ENCODE measurements at regions of chr4 and their contacts with region 1.

Region 1: DNA sequence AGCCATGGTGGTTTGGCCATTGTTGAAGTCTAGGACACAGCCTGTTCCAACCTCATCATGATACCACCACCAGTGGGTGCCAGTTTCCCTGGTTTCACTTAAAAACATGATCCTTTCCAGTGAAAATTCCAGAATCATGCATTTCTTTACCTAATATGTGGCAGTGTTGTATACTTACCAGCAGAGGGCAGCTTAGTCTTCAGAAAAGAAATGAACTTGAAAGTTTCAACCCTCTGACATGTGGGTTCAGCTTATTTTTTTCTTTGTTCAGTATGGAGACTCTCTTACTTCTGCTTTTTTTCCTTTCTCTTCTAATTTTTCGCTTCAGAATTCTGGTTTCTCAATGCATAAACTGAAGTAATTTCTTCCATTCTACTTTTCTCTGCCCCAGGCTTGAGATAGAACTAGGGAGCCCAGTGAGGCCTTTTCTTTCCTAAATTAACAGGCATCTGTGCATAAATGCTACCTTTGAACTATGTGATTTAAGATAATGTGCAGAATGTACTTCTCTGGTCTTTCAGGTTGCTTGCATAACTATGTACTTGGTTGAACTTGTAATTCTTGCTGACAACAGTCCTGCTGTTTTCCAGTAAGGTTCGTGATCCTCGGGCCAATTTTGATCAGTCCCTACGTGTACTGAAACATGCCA is 10.7 kb downstream of the LIAS start:
- DNase-seq: peak; percentile 48
- ATAC-seq: peak; percentile 95
- H3K4me3 ChIP-seq: no peak overlapping the region
- H3K27ac ChIP-seq: peak overlapping the region; percentile 75; the same call in 1 of the 2 replicates
- H3K4me1 ChIP-seq: peaks cover 7% of the 10 kb centered on the region
- H3K27me3 ChIP-seq: no peaks in the 10 kb centered on the region
- CTCF ChIP-seq: peak; percentile 61 to 79 (median 79); a peak in 4 of 6 replicates
- EP300 ChIP-seq: no peak
- POLR2A ChIP-seq: no peak
- RAD21 ChIP-seq: peak; percentile 90

Region 2: GRCh38 chr4:39458505-39459300 is 10.8 kb before region 1 on chr4 and contains the starts of genes LIAS and RPL9:
- CTCF ChIA-PET with region 1: interaction called, 16 read pairs
- POLR2A ChIA-PET with region 1: interaction called, 4 read pairs
- RAD21 ChIA-PET with region 1: interaction called, 5 read pairs
- SMC1A ChIA-PET with region 1: interaction called, 9 read pairs
- in situ Hi-C with region 1: no loop called
- intact Hi-C with region 1: no loop called
- DNase-seq: peak; percentile 99
- ATAC-seq: peak; percentile 89
- H3K4me3 ChIP-seq: peak within 1 kb of the TSS; percentile 94
- H3K27ac ChIP-seq: peak within 1 kb of the TSS; percentile 92
- H3K4me1 ChIP-seq: peaks cover 2% of the 10 kb centered on the region; the same call in 1 of the 2 replicates
- H3K27me3 ChIP-seq: no peaks in the 10 kb centered on the region
- CTCF ChIP-seq: no peak
- EP300 ChIP-seq: 0 out of 4 replicates have a peak, but pooled peaks of 1 of the 2 experiments have one; percentile 22
- POLR2A ChIP-seq: peak; percentile 99
- RAD21 ChIP-seq: no peak
- polyA plus RNA-seq, gene LIAS: 19.9 to 22.1 TPM
- polyA plus RNA-seq, gene RPL9: 3,033 to 4,444 TPM

Region 3: DNA sequence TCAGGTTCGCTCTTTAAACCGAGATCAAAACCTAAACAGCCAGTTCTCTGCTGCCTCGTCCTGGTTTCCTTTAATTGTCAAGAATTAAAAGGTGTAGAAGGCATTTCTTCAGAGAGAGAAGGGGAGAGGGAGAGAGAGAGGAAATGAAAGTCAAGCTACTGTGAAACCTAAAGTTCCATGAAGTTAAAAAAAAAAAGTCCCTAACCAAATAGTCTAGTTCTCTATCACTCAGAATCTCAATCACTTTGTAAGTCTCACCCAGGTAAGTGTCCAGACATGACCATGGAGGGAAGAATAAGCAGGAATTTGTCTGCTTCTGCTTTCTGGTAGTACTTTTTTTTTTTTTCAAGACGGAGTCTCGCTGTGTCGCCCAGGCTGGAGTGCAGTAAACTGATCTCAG is 187.9 kb after region 1 on chr4:
- CTCF ChIA-PET with region 1: interaction called, 29 read pairs
- POLR2A ChIA-PET with region 1: interaction called, 3 read pairs
- RAD21 ChIA-PET with region 1: interaction called, 25 read pairs
- SMC1A ChIA-PET with region 1: interaction called, 45 read pairs
- in situ Hi-C with region 1: no loop called
- intact Hi-C with region 1: loop called (anchors 1 kb)
- DNase-seq: peak; percentile 67
- ATAC-seq: peak; percentile 88
- H3K4me3 ChIP-seq: no peak overlapping the region
- H3K27ac ChIP-seq: peak overlapping the region; percentile 3; the same call in 1 of the 2 replicates
- H3K4me1 ChIP-seq: peaks cover 31% of the 10 kb centered on the region
- H3K27me3 ChIP-seq: no peaks in the 10 kb centered on the region
- CTCF ChIP-seq: no peak
- EP300 ChIP-seq: peak in 1 of 2 experiments; percentile 76; a peak in 3 of 4 replicates
- POLR2A ChIP-seq: no peak
- RAD21 ChIP-seq: 0 out of 2 replicates have a peak, but pooled peaks have one; percentile 11

Region 4: DNA sequence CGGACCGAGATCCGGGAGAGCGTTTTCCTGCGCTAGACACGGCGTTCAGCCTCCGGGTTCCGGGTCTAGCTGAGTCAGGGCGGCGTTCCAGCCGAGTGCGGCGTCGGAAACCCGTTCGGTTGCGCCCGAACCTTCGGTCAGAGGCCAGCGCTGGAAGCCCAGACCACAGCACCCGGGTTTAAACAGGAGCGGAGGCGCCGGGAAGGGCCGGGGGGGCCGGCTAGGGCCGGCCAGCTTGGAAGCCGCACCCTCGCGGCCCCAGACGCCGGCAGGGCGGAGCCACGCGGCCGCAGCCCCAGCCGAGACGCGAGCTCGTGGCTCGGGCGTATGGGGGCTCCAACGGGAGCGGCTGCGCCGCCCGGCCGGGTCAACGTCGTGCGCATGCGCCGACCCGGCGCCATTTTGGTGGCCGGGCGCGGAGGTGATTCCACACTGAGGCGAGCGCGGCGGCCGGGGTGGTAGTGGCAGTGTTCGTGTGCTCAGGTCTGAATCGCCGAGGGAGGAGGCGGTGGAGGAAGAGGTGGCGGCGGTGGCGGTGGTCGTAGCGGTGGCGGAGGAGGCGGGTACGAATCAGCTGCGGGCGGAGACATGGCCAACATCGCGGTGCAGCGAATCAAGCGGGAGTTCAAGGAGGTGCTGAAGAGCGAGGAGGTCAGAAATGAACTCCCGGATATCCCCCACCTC is 228.3 kb after region 1 on chr4 and contains the start of gene UBE2K:
- CTCF ChIA-PET with region 1: interaction called, 8 read pairs
- POLR2A ChIA-PET with region 1: interaction called, 3 read pairs
- RAD21 ChIA-PET with region 1: interaction called, 8 read pairs
- SMC1A ChIA-PET with region 1: interaction called, 5 read pairs
- in situ Hi-C with region 1: no loop called
- intact Hi-C with region 1: loop called (anchors 1 kb)
- DNase-seq: no peak
- ATAC-seq: peak; percentile 94
- H3K4me3 ChIP-seq: peak within 1 kb of the TSS; percentile 96
- H3K27ac ChIP-seq: peak within 1 kb of the TSS; percentile 92
- H3K4me1 ChIP-seq: peaks cover 4% of the 10 kb centered on the region
- H3K27me3 ChIP-seq: no peaks in the 10 kb centered on the region
- CTCF ChIP-seq: no peak
- EP300 ChIP-seq: no peak
- POLR2A ChIP-seq: peak; percentile 98
- RAD21 ChIP-seq: no peak
- polyA plus RNA-seq, gene UBE2K: 54.3 to 96.4 TPM

Region 5: DNA sequence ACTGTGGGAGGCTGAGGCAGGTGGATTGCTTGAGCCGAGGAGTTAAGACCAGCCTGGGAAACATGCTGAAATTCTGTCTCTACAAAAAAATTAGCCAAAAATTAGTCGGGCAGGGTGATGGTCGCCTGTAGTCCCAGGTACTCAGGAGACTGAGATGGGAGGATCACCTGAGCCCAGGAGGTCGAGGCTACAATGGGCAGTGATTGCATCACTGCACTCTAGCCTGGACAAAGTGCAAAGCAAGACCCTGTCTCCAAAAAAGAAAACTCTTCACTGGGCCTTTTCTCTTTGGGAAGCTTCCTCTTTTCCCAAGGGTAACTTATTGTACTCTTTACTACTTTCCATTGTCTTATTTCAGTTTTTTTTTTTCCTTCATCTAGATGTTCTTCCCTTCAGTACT is 317.3 kb after region 1 on chr4:
- CTCF ChIA-PET with region 1: no interaction called
- POLR2A ChIA-PET with region 1: no interaction called
- RAD21 ChIA-PET with region 1: no interaction called
- SMC1A ChIA-PET with region 1: no interaction called
- in situ Hi-C with region 1: no loop called
- intact Hi-C with region 1: loop called (anchors 10 kb)
- DNase-seq: no peak
- ATAC-seq: 0 out of 3 replicates have a peak, but pooled peaks have one; percentile 18
- H3K4me3 ChIP-seq: no peak overlapping the region
- H3K27ac ChIP-seq: no peak overlapping the region
- H3K4me1 ChIP-seq: no peaks in the 10 kb centered on the region
- H3K27me3 ChIP-seq: no peaks in the 10 kb centered on the region
- CTCF ChIP-seq: no peak
- EP300 ChIP-seq: no peak
- POLR2A ChIP-seq: no peak
- RAD21 ChIP-seq: no peak

Region 6: GRCh38 chr4:39970671-39971640 is 501.4 kb after region 1 on chr4:
- CTCF ChIA-PET with region 1: interaction called, 28 read pairs
- POLR2A ChIA-PET with region 1: no interaction called
- RAD21 ChIA-PET with region 1: interaction called, 19 read pairs
- SMC1A ChIA-PET with region 1: interaction called, 7 read pairs
- in situ Hi-C with region 1: loop called (anchors 5 kb)
- intact Hi-C with region 1: loop called (anchors 2 kb)
- DNase-seq: no peak
- ATAC-seq: peak; percentile 87
- H3K4me3 ChIP-seq: peak overlapping the region; percentile 48; the same call in 1 of the 2 replicates
- H3K27ac ChIP-seq: peak overlapping the region; percentile 41
- H3K4me1 ChIP-seq: peaks cover 14% of the 10 kb centered on the region
- H3K27me3 ChIP-seq: no peaks in the 10 kb centered on the region
- CTCF ChIP-seq: no peak
- EP300 ChIP-seq: no peak
- POLR2A ChIP-seq: no peak
- RAD21 ChIP-seq: no peak

Region 7: DNA sequence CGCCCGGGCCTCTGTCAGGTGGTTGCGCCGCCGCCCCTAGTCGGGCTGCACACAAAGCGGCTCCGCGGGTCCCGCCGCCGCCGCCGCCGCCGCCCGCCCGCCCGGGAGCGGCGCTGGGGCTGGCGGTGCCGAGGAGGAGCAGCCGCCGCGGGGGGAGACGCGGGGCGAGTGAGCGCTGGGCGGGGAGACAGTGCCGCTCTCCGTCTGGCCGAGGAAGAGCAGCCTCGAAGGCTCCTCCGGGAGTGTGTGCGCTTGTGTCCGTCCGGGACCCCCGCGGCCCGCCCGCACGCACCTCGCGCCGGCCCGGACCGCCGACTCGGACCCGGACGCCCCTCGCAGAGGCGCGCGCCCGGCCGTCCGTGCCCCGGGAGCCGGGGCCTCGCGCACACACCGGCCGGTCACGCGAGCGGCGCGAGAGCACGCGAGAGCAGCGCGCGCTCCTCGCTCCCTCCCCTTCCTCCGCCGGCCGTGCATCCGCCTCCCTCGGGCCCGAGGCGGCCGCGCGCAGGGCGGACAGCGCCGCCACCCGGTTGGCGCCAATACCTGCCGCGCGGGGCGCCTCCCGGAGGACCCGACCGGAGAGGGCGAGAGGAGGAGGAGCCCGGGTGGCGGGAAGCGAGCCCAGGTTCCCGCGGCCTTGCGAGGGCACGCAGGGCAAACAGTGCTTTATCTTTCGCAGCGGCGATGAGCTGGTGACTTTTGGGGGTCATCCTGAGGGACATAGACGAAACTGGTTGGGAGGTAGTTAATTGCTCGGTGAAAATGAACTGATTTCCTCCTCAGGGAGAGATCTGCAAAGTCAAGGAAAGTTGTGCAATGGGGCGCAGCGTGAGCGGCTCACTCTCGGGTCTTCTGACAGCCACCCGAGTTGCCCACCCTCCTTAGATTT is 508.2 kb after region 1 on chr4 and contains the start of gene PDS5A:
- CTCF ChIA-PET with region 1: interaction called, 28 read pairs
- POLR2A ChIA-PET with region 1: no interaction called
- RAD21 ChIA-PET with region 1: interaction called, 19 read pairs
- SMC1A ChIA-PET with region 1: interaction called, 7 read pairs
- in situ Hi-C with region 1: loop called (anchors 5 kb)
- intact Hi-C with region 1: loop called (anchors 2 kb)
- DNase-seq: peak; percentile 56
- ATAC-seq: peak; percentile 82
- H3K4me3 ChIP-seq: peak within 1 kb of the TSS; percentile 93
- H3K27ac ChIP-seq: peak within 1 kb of the TSS; percentile 95
- H3K4me1 ChIP-seq: peaks cover 3% of the 10 kb centered on the region
- H3K27me3 ChIP-seq: no peaks in the 10 kb centered on the region
- CTCF ChIP-seq: peak; percentile 84 to 99 (median 94)
- EP300 ChIP-seq: no peak
- POLR2A ChIP-seq: peak; percentile 79
- RAD21 ChIP-seq: peak; percentile 69
- polyA plus RNA-seq, gene PDS5A: 13.7 to 14.1 TPM